ENCODE measurements at regions of chr17 and their contacts with region 1.

Region 1: GRCh38 chr17:16013943-16014407 is 14.4 kb downstream of the TTC19 start:
- DNase-seq: no peak
- ATAC-seq: no peak
- H3K4me3 ChIP-seq: no peak overlapping the region
- H3K4me3 Mint-ChIP-seq: no peak overlapping the region
- H3K27ac ChIP-seq: no peak overlapping the region
- H3K27ac Mint-ChIP-seq: no peak overlapping the region
- H3K4me1 ChIP-seq: no peaks in the 10 kb centered on the region
- H3K4me1 Mint-ChIP-seq: peaks cover 13% of the 10 kb centered on the region
- H3K27me3 ChIP-seq: no peaks in the 10 kb centered on the region
- H3K27me3 Mint-ChIP-seq: no peaks in the 10 kb centered on the region
- CTCF ChIP-seq: no peak

Region 2: GRCh38 chr17:15931394-15931793 is 82.6 kb before region 1 on chr17:
- CTCF ChIA-PET with region 1: no interaction called
- POLR2A ChIA-PET with region 1: no interaction called
- intact Hi-C with region 1: no loop called
- DNase-seq: no peak
- ATAC-seq: no peak
- H3K4me3 ChIP-seq: no peak overlapping the region
- H3K4me3 Mint-ChIP-seq: no peak overlapping the region
- H3K27ac ChIP-seq: no peak overlapping the region
- H3K27ac Mint-ChIP-seq: no peak overlapping the region
- H3K4me1 ChIP-seq: no peaks in the 10 kb centered on the region
- H3K4me1 Mint-ChIP-seq: peaks cover 2% of the 10 kb centered on the region
- H3K27me3 ChIP-seq: no peaks in the 10 kb centered on the region
- H3K27me3 Mint-ChIP-seq: peaks cover 13% of the 10 kb centered on the region
- CTCF ChIP-seq: no peak

Region 3: DNA sequence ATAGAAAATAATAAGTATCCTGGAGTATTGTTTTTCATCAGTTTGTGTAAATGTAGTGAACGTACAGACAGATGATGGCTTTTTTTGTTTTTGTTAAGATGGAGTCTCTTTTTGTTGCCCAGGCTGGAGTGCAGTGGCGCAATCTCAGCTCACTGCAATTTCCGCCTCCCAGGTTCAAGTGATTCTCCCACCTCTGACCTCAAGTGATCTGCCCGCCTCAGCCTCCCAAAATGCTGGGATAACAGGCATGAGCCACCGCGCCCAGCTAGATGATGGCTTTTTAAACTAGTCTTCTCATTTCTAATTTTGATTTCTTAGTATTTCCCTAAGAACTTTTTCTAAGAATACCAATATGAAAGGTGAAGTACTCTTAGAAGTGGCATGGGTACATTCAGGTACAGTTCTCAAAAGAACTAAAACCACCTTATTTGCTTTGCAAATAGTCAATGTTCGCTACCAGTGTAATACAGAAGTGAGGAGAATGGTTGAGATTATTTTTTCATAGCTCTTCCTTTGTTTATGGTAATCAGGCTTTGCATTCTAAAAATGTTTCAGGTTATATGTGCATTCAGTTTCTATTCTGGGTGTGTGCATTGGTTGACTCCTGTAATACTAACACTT is 19.9 kb after region 1 on chr17:
- CTCF ChIA-PET with region 1: no interaction called
- POLR2A ChIA-PET with region 1: no interaction called
- intact Hi-C with region 1: loop called in 1 of 2 experiments (anchors 2 kb)
- DNase-seq: no peak
- ATAC-seq: no peak
- H3K4me3 ChIP-seq: no peak overlapping the region
- H3K4me3 Mint-ChIP-seq: no peak overlapping the region
- H3K27ac ChIP-seq: no peak overlapping the region
- H3K27ac Mint-ChIP-seq: peak overlapping the region; percentile 20
- H3K4me1 ChIP-seq: no peaks in the 10 kb centered on the region
- H3K4me1 Mint-ChIP-seq: peaks cover 2% of the 10 kb centered on the region
- H3K27me3 ChIP-seq: no peaks in the 10 kb centered on the region
- H3K27me3 Mint-ChIP-seq: no peaks in the 10 kb centered on the region
- CTCF ChIP-seq: no peak

Region 4: GRCh38 chr17:16419074-16419928 is 405.3 kb after region 1 on chr17:
- CTCF ChIA-PET with region 1: no interaction called
- POLR2A ChIA-PET with region 1: no interaction called
- intact Hi-C with region 1: no loop called
- DNase-seq: peak in 7 of 9 experiments; percentile 37 to 69 (median 54)
- ATAC-seq: peak; percentile 14
- H3K4me3 ChIP-seq: no peak overlapping the region
- H3K4me3 Mint-ChIP-seq: peak overlapping the region; percentile 46
- H3K27ac ChIP-seq: peak overlapping the region in 1 of 2 experiments; percentile 97
- H3K27ac Mint-ChIP-seq: peak overlapping the region; percentile 99
- H3K4me1 ChIP-seq: peaks cover 52% of the 10 kb centered on the region
- H3K4me1 Mint-ChIP-seq: peaks cover 65% of the 10 kb centered on the region
- H3K27me3 ChIP-seq: no peaks in the 10 kb centered on the region
- H3K27me3 Mint-ChIP-seq: no peaks in the 10 kb centered on the region
- CTCF ChIP-seq: no peak

Measured in CD8-positive, alpha-beta T cell (primary cell).